ENCODE measurements at regions of chr14 and their contacts with region 1.

Region 1: GRCh38 chr14:96424109-96424989 is 32.4 kb downstream of the AK7 start:
- DNase-seq: peak; percentile 18 to 80
- ATAC-seq: peak; percentile 86 to 88 (median 86)
- H3K4me3 ChIP-seq: peak overlapping the region; percentile 30
- H3K4me3 Mint-ChIP-seq: peak overlapping the region; percentile 85
- H3K27ac ChIP-seq: no peak overlapping the region
- H3K27ac Mint-ChIP-seq: no peak overlapping the region
- H3K4me1 ChIP-seq: peaks cover 7% of the 10 kb centered on the region
- H3K4me1 Mint-ChIP-seq: peaks cover 7% of the 10 kb centered on the region in 2 donors
- H3K27me3 ChIP-seq: peaks cover 5% of the 10 kb centered on the region
- H3K27me3 Mint-ChIP-seq: peaks cover 5 to 23% of the 10 kb centered on the region in 2 donors
- CTCF ChIP-seq: peak; percentile 91

Region 2: DNA sequence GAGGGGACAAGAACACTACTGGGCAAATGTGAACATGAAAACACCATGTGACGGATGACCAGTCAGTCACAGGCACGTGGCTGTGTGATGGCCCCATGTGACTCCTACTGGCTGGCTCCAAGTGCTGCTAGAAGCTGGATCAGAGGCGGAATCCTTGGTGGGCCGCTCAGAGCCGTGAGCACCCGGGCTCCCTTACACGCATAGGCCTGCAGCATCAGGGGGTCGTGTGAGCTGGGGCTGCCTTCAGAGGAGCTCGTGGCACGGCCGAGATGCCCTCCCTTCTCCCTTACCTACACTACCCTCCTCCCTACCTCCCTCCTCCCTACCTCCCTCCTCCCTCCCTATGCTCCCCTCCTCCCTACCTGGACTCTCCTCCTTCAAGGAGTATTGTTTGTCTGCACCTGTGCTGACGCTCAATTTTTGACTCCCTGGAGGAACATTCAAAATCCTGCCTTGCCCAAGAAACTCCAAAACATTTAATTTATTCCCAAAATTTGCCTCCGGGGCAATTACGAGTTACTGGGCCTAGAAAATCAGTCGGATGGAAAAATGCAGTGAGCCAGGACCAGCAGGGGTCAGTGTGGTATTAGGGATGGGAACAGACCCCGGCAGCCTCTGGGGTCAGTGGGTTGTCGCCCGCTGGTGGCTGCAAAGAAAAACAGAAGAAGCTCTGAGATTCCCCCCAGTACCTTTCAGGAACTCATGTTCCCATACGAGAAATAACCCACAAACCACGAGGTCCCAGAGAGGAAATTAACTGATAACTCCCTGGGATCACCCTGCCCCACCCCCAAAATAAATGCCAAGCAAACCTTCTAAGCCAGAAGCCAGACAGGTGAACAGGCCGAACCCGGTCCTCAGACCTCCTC is 324.0 kb before region 1 on chr14:
- intact Hi-C with region 1: loop called (anchors 10 kb)
- DNase-seq: peak in 1 of 2 donors; percentile 86
- ATAC-seq: peak in 1 of 3 donors; percentile 38
- H3K4me3 ChIP-seq: no peak overlapping the region
- H3K4me3 Mint-ChIP-seq: no peak overlapping the region
- H3K27ac ChIP-seq: no peak overlapping the region
- H3K27ac Mint-ChIP-seq: no peak overlapping the region
- H3K4me1 ChIP-seq: no peaks in the 10 kb centered on the region
- H3K4me1 Mint-ChIP-seq: no peaks in the 10 kb centered on the region
- H3K27me3 ChIP-seq: no peaks in the 10 kb centered on the region
- H3K27me3 Mint-ChIP-seq: no peaks in the 10 kb centered on the region
- CTCF ChIP-seq: no peak

Region 3: DNA sequence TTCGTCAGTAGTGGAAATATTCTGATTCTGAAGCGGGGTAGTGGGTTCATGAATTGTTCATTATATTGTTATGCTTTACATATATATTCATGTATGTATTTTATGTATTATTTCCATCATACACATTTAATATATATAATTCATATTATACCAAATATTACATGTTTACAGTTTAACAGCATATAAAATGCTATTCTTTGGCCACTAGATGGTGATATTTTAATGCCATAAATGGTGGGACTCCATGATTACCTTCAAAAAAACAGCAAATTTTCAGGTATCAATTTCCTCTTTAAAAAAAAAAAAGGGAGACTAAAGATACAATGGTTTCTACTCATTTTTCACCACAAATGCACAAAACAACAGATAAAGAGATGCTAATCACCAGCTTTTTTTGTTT is 127.3 kb before region 1 on chr14:
- intact Hi-C with region 1: loop called (anchors 1 kb)
- DNase-seq: peak in 1 of 2 donors; percentile 46
- ATAC-seq: peak in 1 of 3 donors; percentile 45
- H3K4me3 ChIP-seq: no peak overlapping the region
- H3K4me3 Mint-ChIP-seq: no peak overlapping the region
- H3K27ac ChIP-seq: no peak overlapping the region
- H3K27ac Mint-ChIP-seq: no peak overlapping the region
- H3K4me1 ChIP-seq: no peaks in the 10 kb centered on the region
- H3K4me1 Mint-ChIP-seq: no peaks in the 10 kb centered on the region
- H3K27me3 ChIP-seq: no peaks in the 10 kb centered on the region
- H3K27me3 Mint-ChIP-seq: no peaks in the 10 kb centered on the region
- CTCF ChIP-seq: peak; percentile 57

Measured in natural killer cell (primary cell).